ENCODE measurements at regions of chr2 and their contacts with region 1.

Region 1: GRCh38 chr2:42828487-42829425 is 36.4 kb upstream of the HAAO start:
- DNase-seq: peak; percentile 61 to 74
- ATAC-seq: peak; percentile 88

Region 2: GRCh38 chr2:43133708-43134570 is 305.2 kb after region 1 on chr2:
- intact Hi-C with region 1: no loop called
- DNase-seq: peak; percentile 71 to 74
- ATAC-seq: no peak

Region 3: GRCh38 chr2:43542285-43542937 is 713.7 kb after region 1 on chr2:
- intact Hi-C with region 1: loop called in 1 of 2 experiments (anchors 5 kb)
- DNase-seq: no peak
- ATAC-seq: peak; percentile 58

Region 4: DNA sequence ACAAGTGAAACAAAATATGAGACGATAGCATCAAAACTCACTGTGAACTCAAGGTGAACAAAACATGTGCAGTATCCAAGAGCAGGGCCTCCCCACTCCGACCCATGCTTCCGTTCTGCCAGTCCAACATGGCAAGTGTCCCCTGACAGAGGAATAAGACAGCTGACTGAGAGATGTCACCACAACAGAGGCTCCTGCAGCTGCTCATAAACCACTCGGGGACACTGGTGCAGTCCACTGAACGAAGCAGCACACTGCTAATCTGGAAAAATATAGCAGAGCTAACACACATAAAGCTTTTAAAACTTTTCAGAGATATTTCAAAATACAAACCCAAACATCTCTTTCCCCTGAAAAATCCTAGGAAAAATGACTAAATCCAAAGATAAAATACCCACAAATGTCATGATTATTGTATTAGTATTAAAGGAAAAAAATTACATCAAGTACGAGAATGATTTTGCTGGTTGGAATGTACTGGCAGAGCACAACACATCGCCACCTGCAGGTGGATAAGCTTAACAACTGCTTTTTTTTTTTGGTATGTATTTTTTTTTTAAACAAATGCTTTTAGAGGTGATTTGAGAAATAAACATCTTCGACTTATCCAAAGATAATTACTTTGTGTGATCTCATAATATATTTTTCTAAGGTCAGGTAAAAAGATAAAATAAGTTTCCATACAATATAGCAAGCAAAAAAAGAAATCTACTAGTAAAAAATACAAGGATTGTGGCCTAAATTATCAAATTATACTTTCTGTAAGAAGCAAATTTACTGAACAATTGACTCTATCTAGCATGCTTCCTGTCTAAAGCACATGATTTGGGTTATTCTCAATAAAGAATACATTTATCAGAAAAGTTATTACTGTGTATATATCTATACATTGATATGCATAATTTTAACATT is 748.5 kb after region 1 on chr2:
- intact Hi-C with region 1: loop called in 1 of 2 experiments (anchors 10 kb)
- DNase-seq: no peak
- ATAC-seq: no peak

Measured in left colon (tissue), 2 donors.